ENCODE measurements at regions of chr6 and their contacts with region 1.

Region 1: GRCh38 chr6:32868257-32868788 is 14.3 kb downstream of the PSMB9 start:
- DNase-seq: peak; percentile 88
- H3K4me3 Mint-ChIP-seq: no peak overlapping the region
- H3K27ac Mint-ChIP-seq: no peak overlapping the region
- H3K4me1 Mint-ChIP-seq: peaks cover 35% of the 10 kb centered on the region
- H3K27me3 Mint-ChIP-seq: peaks cover 7% of the 10 kb centered on the region

Region 2: DNA sequence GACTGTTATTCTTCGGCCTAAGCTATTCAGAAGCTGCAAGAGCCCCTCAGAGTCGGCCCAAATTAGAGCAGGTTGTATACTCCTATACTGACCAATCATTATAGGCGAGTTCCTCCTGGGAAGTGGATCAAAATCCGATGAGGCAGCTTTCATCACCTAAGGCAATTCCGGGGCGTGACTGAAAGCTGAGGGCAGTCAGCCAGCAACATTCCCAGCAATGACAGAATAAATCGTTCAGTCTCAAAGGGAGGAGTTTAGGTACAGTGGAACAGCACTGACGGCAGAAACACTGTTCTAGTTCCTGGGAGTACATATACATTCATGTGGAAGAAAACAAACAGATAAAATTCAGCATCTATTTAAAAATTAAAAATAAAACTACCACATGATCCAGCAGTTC is 115.7 kb before region 1 on chr6:
- CTCF ChIA-PET with region 1: no interaction called
- POLR2A ChIA-PET with region 1: no interaction called
- DNase-seq: no peak
- H3K4me3 Mint-ChIP-seq: no peak overlapping the region
- H3K27ac Mint-ChIP-seq: no peak overlapping the region
- H3K4me1 Mint-ChIP-seq: no peaks in the 10 kb centered on the region
- H3K27me3 Mint-ChIP-seq: peaks cover 52% of the 10 kb centered on the region

Region 3: DNA sequence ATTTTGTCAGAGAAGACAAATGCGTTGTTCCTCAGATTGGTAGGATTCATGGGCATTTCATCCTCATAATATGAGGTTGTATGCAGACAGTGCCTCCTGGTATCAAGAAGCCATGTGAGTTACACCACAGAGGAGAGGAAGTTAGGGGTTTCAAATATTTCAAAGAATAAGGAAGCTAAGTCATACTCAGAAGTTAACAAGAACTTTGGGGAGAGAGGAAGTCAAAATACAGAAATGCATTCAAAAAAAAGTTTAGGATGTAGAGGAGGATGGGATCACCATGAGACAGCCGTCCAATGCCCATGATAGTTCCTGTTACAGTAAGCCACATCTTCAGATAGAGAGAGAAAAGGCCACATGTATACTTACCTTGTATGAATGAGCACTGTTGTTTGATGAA is 73.8 kb before region 1 on chr6:
- CTCF ChIA-PET with region 1: interaction called, 10 read pairs
- POLR2A ChIA-PET with region 1: interaction called, 6 read pairs
- DNase-seq: no peak
- H3K4me3 Mint-ChIP-seq: no peak overlapping the region
- H3K27ac Mint-ChIP-seq: no peak overlapping the region
- H3K4me1 Mint-ChIP-seq: peaks cover 25% of the 10 kb centered on the region
- H3K27me3 Mint-ChIP-seq: peaks cover 79% of the 10 kb centered on the region

Region 4: DNA sequence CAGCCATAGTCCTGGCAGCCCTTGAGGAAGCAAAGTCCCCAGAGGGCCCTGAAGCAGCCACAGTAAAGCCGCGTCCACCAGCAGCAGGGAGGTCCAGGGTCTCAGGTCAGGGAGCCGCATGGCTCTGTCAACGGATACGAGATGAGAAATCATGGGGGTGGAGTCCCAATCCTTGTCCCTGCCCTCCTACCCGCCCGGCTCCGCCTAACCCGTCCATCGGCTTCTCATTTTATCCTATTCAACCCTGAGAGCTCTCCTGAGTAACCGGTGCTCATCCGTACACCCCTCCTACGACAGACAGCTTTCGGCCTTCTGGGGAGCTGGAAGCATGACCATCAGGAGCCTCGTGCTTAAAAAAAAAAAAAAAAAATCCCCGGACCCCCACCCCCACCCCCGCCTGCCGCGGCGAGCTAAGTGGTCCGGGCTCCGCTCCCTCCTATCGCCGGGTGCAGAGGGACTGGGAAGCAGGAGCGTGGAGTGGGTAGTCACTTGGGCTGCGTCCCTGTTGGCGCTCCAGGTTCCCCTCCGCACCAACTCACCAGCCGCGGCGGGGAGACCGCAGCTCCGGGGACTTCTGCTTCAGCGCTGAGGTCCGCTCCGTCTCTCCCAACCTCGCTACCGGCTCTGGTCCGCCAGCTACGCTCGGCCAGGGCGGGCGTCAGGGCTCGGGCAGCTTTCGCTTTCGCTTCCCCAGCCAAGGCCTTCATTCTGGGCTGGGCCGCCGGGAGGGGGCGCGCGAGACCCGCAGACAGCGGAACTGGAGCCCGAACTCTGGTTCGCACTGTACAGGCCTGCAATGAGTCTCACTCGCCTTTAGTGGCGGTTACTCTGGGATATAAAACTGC is 30.0 kb before region 1 on chr6 and contains the start of gene TAP2:
- CTCF ChIA-PET with region 1: interaction called, 234 read pairs
- POLR2A ChIA-PET with region 1: interaction called, 125 read pairs
- DNase-seq: peak; percentile 98
- H3K4me3 Mint-ChIP-seq: peak within 1 kb of the TSS; percentile 77
- H3K27ac Mint-ChIP-seq: peak within 1 kb of the TSS; percentile 99
- H3K4me1 Mint-ChIP-seq: peaks cover 80% of the 10 kb centered on the region
- H3K27me3 Mint-ChIP-seq: no peaks in the 10 kb centered on the region
- total RNA-seq, gene TAP2: 203 to 211 TPM

Region 5: GRCh38 chr6:32853541-32854375 is 14.6 kb before region 1 on chr6 and contains the starts of genes PSMB9 and TAP1:
- CTCF ChIA-PET with region 1: interaction called, 95 read pairs
- POLR2A ChIA-PET with region 1: interaction called, 39 read pairs
- DNase-seq: peak; percentile 95
- H3K4me3 Mint-ChIP-seq: peak within 1 kb of the TSS; percentile 100
- H3K27ac Mint-ChIP-seq: peak within 1 kb of the TSS; percentile 99
- H3K4me1 Mint-ChIP-seq: peaks cover 59% of the 10 kb centered on the region
- H3K27me3 Mint-ChIP-seq: no peaks in the 10 kb centered on the region
- total RNA-seq, gene PSMB9: 368 to 372 TPM
- total RNA-seq, gene TAP1: 410 to 412 TPM

Region 6: DNA sequence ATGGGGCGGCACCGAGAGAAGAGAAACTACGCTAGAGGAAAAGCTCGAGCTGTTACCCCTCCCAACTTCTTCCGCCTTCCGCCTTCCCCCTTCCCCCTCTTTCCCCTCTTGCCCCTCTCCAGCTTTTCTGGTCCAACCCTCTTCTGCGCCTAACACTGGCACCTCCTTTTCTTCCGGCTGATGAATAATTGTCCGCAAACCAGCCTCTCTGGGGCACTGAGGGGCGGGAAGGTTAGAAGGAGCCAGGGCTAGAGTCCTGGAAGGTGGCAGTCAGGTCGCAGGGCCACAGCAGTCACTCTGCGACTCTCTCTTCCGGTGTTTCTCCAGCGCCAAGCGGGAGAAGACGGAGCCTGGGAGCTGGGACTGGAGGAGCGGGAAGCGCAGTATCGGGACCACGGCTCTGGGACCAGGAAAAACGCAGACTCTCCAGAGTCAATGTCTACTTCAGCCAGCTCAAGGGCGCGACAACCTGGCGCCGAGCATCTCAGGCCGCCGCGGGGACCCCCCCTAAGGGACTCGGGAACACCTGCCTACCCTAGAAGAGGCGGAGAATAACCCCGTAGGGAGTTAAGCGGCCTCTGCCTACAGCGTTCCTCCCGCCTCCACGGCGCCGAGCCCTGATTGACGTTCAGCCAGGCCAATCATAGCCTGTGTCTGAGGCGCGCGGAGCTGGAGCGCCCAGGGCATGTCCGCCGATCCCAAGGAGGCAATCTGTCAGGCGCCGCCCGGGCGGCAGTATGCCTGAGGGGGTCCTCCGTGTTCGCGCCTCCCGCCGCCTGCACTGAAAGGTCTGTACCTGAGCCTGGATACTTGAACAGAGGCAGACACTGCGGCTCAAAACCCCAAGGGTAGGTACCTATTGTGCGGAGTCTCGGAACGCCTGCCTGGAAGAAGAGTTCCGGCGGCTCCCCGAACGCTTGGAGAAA is 26.0 kb after region 1 on chr6:
- CTCF ChIA-PET with region 1: interaction called, 17 read pairs
- POLR2A ChIA-PET with region 1: interaction called, 3 read pairs
- DNase-seq: peak; percentile 95
- H3K4me3 Mint-ChIP-seq: peak overlapping the region; percentile 99
- H3K27ac Mint-ChIP-seq: peak overlapping the region; percentile 91
- H3K4me1 Mint-ChIP-seq: peaks cover 40% of the 10 kb centered on the region
- H3K27me3 Mint-ChIP-seq: peaks cover 8% of the 10 kb centered on the region

Region 7: DNA sequence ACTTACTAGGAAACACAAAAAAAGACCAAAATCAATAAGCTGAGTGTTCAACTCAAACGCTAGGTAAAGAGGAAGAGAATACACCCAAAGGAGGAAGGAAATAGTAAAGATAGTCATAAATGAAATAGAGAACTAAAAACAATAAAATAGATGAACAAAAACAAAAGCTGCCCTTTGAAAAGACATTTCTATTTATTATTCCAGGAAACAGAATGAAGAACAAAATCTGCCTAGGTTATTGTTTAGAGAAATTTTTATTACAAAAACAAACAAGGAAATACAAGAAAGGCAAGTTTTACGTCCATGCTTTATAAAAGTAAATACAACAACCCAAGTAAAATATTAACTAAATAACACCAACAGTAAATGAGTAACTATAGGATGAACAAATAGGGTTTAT is 52.4 kb after region 1 on chr6:
- CTCF ChIA-PET with region 1: no interaction called
- POLR2A ChIA-PET with region 1: no interaction called
- DNase-seq: no peak
- H3K4me3 Mint-ChIP-seq: no peak overlapping the region
- H3K27ac Mint-ChIP-seq: no peak overlapping the region
- H3K4me1 Mint-ChIP-seq: peaks cover 8% of the 10 kb centered on the region
- H3K27me3 Mint-ChIP-seq: peaks cover 23% of the 10 kb centered on the region

Region 8: GRCh38 chr6:32952817-32953739 is 84.8 kb after region 1 on chr6 and contains the start of gene HLA-DMA:
- CTCF ChIA-PET with region 1: interaction called, 25 read pairs
- POLR2A ChIA-PET with region 1: interaction called, 5 read pairs
- DNase-seq: peak; percentile 83
- H3K4me3 Mint-ChIP-seq: peak within 1 kb of the TSS; percentile 81
- H3K27ac Mint-ChIP-seq: peak within 1 kb of the TSS; percentile 67
- H3K4me1 Mint-ChIP-seq: peaks cover 56% of the 10 kb centered on the region
- H3K27me3 Mint-ChIP-seq: no peaks in the 10 kb centered on the region
- total RNA-seq, gene HLA-DMA: 54.0 to 54.3 TPM